Activated B cell treated with CpG ODN at 0.5 μM for 24 hours (primary cell): ENCODE measurements at regions of chr1 and their contacts with region 1.

Region 1: DNA sequence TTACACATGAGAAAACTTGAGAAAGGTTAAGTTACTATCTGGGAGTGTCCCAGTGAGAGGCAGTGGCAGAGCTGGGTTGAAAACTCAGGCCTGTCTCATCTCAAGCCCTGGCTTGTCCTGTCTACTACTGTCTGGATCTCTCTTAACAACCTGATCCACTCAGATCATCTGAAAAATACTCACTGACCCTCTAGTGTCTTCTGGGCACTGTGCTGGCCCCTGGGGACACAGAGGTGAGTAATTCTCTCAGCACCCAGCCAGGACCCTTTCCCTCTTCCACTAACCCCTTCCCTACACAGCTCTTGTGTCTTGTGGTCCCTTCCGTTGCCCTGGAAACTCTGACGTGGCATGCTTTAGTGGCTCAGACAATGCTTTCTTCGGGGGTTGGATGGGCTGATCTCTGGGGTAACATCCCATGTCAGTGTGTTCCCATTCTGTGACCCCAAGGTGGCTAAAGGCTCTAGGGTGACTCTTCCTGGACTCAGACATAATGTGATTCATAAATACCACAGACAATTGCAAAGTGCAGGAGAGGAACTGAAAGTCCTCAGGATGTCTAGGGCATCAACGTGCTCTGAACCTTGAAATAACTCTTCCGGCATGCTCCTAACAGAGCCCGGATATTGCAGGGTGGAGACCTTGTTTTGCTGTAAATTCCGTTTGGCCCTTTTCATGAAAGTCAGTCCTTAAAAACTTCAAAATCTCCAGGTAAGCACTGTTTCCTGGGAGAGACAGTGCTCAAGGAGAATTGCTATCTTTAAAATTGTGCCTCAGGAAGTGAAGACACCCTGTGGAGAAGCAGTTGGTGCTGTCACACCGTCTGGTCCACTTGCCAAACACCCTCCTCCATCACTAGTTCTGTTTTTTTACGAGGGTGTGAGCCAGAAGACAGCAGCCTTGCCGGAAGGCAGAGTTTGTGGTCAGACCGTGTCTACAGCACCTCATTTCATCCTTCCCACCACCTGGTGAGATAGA is 4.0 kb downstream of the SHISAL2A start:
- DNase-seq: peak; percentile 67
- ATAC-seq: peak; percentile 69
- H3K4me3 Mint-ChIP-seq: peak overlapping the region; percentile 81
- H3K27ac Mint-ChIP-seq: peak overlapping the region; percentile 99
- H3K4me1 Mint-ChIP-seq: peaks cover 90% of the 10 kb centered on the region
- H3K27me3 Mint-ChIP-seq: no peaks in the 10 kb centered on the region
- CTCF ChIP-seq: no peak

Region 2: GRCh38 chr1:52404116-52404986 is 232.7 kb before region 1 on chr1 and contains the starts of genes ORC1 and PRPF38A:
- CTCF ChIA-PET with region 1: no interaction called
- POLR2A ChIA-PET with region 1: interaction called, 5 read pairs
- intact Hi-C with region 1: loop called (anchors 1 kb)
- DNase-seq: peak; percentile 88
- ATAC-seq: peak; percentile 95
- H3K4me3 Mint-ChIP-seq: peak within 1 kb of the TSS; percentile 99
- H3K27ac Mint-ChIP-seq: peak within 1 kb of the TSS; percentile 95
- H3K4me1 Mint-ChIP-seq: peaks cover 32% of the 10 kb centered on the region
- H3K27me3 Mint-ChIP-seq: no peaks in the 10 kb centered on the region
- CTCF ChIP-seq: no peak
- total RNA-seq, gene ORC1: 3.2 TPM in 2 replicates
- total RNA-seq, gene PRPF38A: 75.6 and 78.4 TPM in 2 replicates

Region 3: DNA sequence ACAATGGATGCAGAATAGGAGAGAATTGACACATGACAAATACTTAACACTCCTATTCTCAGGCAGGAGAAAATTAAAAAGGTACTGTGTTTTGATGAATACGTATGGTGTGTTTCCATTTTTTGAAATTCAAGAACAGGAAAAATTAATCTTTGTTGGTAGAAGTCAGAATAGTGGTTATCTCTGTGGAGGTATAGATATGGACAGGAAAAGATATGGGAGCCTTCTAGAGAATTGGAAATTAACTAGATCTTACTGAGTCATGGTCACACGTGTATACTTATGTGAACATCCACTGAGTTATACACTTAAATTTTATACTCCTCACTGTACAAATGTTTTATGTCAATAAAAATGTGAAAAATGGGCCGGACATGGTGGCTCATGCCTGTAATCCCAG is 74.2 kb before region 1 on chr1:
- CTCF ChIA-PET with region 1: no interaction called
- POLR2A ChIA-PET with region 1: no interaction called
- intact Hi-C with region 1: no loop called
- DNase-seq: no peak
- ATAC-seq: no peak
- H3K4me3 Mint-ChIP-seq: no peak overlapping the region
- H3K27ac Mint-ChIP-seq: no peak overlapping the region
- H3K4me1 Mint-ChIP-seq: peaks cover 1% of the 10 kb centered on the region
- H3K27me3 Mint-ChIP-seq: no peaks in the 10 kb centered on the region
- CTCF ChIP-seq: no peak

Region 4: DNA sequence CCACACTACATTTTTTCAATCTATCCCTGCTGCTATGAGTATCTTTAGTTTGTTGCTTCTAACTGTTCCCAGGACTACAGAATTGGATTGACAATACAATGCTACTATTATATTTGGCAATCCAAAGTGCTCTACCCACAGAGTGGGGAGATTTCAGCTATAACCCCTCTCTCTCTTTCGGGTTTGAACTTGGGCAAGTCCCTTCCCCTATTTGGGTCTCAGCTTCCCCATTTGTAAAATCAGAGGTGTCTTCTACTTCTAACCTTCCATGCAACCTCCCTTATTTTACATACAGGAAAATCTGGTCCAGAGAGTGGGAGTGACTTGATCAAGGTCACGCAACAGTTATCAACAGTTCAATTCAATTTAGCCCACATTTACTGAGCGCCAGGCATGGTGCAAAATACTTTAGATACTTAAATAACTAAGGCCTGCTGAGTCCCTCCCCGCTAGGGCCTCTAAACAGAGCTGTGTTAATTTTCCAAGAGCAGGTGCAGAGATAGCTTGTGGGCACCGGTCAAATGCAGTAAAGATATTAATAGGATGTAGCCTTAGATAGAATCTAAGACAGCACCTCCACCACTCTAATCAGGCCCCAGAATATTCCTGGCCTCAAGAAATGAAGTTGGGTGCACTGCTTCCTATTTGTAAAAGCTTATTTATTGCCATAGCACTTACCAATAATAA is 44.2 kb before region 1 on chr1:
- CTCF ChIA-PET with region 1: no interaction called
- POLR2A ChIA-PET with region 1: interaction called, 25 read pairs
- intact Hi-C with region 1: no loop called
- DNase-seq: no peak
- ATAC-seq: peak; percentile 63
- H3K4me3 Mint-ChIP-seq: peak overlapping the region; percentile 42
- H3K27ac Mint-ChIP-seq: peak overlapping the region; percentile 62
- H3K4me1 Mint-ChIP-seq: peaks cover 40% of the 10 kb centered on the region
- H3K27me3 Mint-ChIP-seq: no peaks in the 10 kb centered on the region
- CTCF ChIP-seq: no peak

Region 5: DNA sequence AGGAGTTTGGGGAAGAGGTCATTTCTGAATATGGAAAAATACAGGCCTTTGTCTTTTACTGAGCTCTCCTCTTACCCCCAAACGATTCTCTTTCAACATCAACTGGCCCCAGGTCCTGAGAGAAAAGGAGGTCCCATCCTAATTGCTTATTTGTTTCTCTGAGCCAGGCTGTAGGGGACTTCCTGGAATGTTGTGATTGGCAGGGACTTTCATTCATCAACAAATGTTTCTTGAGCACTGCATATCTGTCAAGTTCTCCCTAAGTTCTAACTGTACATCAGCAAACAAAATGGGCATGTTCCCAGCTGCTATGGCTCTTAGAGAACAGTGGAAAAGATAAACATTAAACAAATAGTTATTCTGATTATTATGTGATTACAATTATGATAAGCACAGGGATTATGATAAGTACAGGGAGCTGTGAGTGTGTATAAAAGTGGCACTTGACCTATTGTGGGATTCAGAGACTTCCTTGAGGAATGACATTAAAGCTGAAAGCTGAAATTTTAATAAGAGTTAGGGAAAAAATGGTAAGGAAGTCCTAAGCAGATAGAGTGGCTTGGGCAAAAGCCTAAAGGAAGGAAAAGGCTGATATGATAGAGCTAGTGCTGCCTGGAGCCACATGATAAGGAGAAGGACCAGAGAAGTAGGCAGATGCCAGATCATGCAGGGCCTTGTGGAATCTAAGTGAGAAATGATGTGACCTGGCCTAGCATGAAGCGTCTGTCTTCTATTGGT is 23.2 kb before region 1 on chr1:
- CTCF ChIA-PET with region 1: interaction called, 4 read pairs
- POLR2A ChIA-PET with region 1: interaction called, 16 read pairs
- intact Hi-C with region 1: no loop called
- DNase-seq: no peak
- ATAC-seq: no peak
- H3K4me3 Mint-ChIP-seq: no peak overlapping the region
- H3K27ac Mint-ChIP-seq: peak overlapping the region; percentile 57
- H3K4me1 Mint-ChIP-seq: peaks cover 13% of the 10 kb centered on the region
- H3K27me3 Mint-ChIP-seq: no peaks in the 10 kb centered on the region
- CTCF ChIP-seq: no peak

Region 6: GRCh38 chr1:52662645-52663313 is 25.8 kb after region 1 on chr1:
- CTCF ChIA-PET with region 1: interaction called, 23 read pairs
- POLR2A ChIA-PET with region 1: interaction called, 39 read pairs
- intact Hi-C with region 1: loop called (anchors 1 kb)
- DNase-seq: no peak
- ATAC-seq: no peak
- H3K4me3 Mint-ChIP-seq: no peak overlapping the region
- H3K27ac Mint-ChIP-seq: peak overlapping the region; percentile 61
- H3K4me1 Mint-ChIP-seq: peaks cover 26% of the 10 kb centered on the region
- H3K27me3 Mint-ChIP-seq: no peaks in the 10 kb centered on the region
- CTCF ChIP-seq: no peak

Region 7: GRCh38 chr1:52677076-52677806 is 40.2 kb after region 1 on chr1:
- CTCF ChIA-PET with region 1: no interaction called
- POLR2A ChIA-PET with region 1: interaction called, 20 read pairs
- intact Hi-C with region 1: loop called (anchors 1 kb)
- DNase-seq: no peak
- ATAC-seq: no peak
- H3K4me3 Mint-ChIP-seq: no peak overlapping the region
- H3K27ac Mint-ChIP-seq: no peak overlapping the region
- H3K4me1 Mint-ChIP-seq: peaks cover 25% of the 10 kb centered on the region
- H3K27me3 Mint-ChIP-seq: no peaks in the 10 kb centered on the region
- CTCF ChIP-seq: no peak

Region 8: DNA sequence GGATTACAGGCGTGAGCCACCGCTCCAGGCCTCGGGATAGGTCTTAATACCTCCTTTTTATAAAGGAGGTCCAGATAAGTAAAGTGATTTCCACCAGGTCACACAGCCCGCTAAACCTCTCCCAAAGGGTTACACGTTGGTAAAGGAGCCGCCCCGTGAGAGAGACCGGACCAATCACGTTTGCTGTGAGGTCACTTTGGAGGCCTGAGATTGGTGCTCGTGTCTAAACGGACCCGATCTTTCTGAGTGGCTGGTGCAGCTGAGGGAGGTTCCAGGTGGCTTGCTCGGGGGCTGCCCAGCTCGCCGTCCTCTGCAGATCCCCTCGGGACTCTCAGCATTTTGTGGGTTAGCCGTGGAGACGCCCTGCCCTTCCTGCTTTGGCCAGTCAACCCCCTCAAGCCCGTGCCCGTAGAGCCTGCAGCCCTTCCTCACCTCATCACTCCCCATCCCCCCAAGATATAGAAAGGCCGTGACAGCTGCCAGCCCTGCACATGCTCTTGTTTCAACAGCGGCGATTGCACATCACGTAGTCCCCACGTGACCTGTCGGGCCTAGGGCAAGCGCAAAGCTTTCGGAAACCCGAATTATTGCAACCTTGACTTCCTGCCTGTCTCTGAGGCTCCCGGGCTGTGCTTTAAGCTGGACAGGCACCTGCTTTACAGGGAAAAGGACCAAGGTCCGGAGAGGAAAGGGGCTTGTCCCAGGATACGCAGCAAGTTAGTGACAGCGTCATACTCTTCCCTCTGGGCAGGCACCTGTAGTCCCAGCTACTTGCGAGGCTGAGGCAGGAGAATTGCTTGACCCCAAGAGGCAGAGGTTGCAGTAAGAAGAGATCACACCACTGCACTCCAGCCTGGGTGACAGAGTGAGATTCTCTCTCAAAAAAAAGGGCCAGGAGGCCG is 66.1 kb after region 1 on chr1:
- CTCF ChIA-PET with region 1: no interaction called
- POLR2A ChIA-PET with region 1: interaction called, 8 read pairs
- intact Hi-C with region 1: loop called (anchors 1 kb)
- DNase-seq: peak; percentile 74
- ATAC-seq: peak; percentile 87
- H3K4me3 Mint-ChIP-seq: peak overlapping the region; percentile 87
- H3K27ac Mint-ChIP-seq: peak overlapping the region; percentile 98
- H3K4me1 Mint-ChIP-seq: peaks cover 26% of the 10 kb centered on the region
- H3K27me3 Mint-ChIP-seq: peaks cover 2% of the 10 kb centered on the region
- CTCF ChIP-seq: no peak